Activated naive CD4-positive, alpha-beta T cell treated with anti-CD3 and anti-CD28 coated beads for 36 hours (primary cell): ENCODE measurements at regions of chr4 and their contacts with region 1.

Region 1: GRCh38 chr4:123396307-123397143 is at the start of gene SPRY1:
- DNase-seq: peak; percentile 88
- H3K4me3 Mint-ChIP-seq: peak within 1 kb of the TSS; percentile 87
- H3K27ac Mint-ChIP-seq: peak within 1 kb of the TSS; percentile 83
- H3K4me1 Mint-ChIP-seq: peaks cover 18% of the 10 kb centered on the region
- H3K27me3 Mint-ChIP-seq: peaks cover 15% of the 10 kb centered on the region
- total RNA-seq, gene SPRY1: 16.9 to 20.3 TPM

Region 2: GRCh38 chr4:121800961-121801714 is 1595.4 kb before region 1 on chr4 and contains the start of gene EXOSC9:
- CTCF ChIA-PET with region 1: no interaction called
- intact Hi-C with region 1: loop called (anchors 5 kb)
- DNase-seq: peak; percentile 95
- H3K4me3 Mint-ChIP-seq: peak within 1 kb of the TSS; percentile 89
- H3K27ac Mint-ChIP-seq: peak within 1 kb of the TSS; percentile 98
- H3K4me1 Mint-ChIP-seq: peaks cover 46% of the 10 kb centered on the region
- H3K27me3 Mint-ChIP-seq: no peaks in the 10 kb centered on the region
- total RNA-seq, gene EXOSC9: 57.7 to 58.7 TPM

Region 3: DNA sequence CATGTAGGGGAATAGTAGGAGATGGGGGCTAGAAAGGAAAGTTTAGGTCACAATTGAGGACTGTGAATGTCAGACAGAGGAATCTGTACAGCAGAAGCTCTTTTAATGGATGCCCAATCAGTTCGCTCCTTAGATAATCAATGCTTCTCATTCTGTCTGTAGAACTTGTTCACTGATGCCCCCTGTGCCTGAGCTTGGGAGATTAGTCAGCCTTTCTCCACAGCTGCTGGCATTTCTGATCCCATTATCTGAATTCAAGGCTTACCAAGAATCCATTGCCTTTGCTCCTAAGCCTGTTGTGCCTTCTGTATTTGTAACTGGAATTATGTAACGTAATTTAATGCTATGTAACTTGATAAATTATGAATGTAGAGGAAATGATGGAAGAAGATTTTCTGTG is 717.2 kb before region 1 on chr4:
- CTCF ChIA-PET with region 1: no interaction called
- intact Hi-C with region 1: no loop called
- DNase-seq: no peak
- H3K4me3 Mint-ChIP-seq: no peak overlapping the region
- H3K27ac Mint-ChIP-seq: no peak overlapping the region
- H3K4me1 Mint-ChIP-seq: peaks cover 11% of the 10 kb centered on the region
- H3K27me3 Mint-ChIP-seq: peaks cover 18% of the 10 kb centered on the region

Region 4: DNA sequence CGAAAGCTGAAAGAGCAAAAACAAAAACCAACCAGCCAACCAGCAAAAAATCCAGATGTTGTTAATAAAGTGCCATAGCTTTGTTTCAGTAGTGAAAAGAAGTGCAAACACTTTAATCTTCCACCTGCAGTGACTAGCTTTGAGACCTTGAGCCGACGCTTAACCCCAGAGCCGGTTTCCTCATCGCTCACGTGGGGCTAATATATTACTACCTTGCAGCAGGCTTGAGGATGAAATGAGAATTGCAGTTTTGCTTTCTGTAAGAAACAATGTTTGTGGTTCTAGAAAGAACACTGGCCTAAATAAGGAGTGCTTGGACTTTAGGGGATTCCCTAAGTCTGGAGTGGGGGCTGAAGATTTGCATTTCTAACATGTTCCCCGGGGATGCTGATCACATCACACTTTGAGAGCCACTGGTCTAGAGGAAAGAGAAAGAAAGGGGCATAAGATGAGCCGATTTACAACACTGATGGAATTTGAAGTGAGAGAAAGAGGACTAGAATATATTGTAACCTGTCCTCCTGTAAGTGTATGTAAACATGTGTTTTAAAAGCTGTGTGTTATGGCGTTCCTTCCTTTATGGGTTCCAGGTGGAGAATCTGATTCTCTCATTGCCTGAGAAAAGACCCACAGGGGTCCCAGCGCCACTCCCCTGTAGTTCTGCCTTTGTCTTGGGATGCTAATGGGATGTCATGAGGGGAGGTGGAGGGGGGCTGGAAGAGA is 568.5 kb before region 1 on chr4:
- CTCF ChIA-PET with region 1: no interaction called
- intact Hi-C with region 1: loop called (anchors 2 kb)
- DNase-seq: peak; percentile 71
- H3K4me3 Mint-ChIP-seq: peak overlapping the region; percentile 78
- H3K27ac Mint-ChIP-seq: peak overlapping the region; percentile 9
- H3K4me1 Mint-ChIP-seq: peaks cover 12% of the 10 kb centered on the region
- H3K27me3 Mint-ChIP-seq: peaks cover 74% of the 10 kb centered on the region

Region 5: DNA sequence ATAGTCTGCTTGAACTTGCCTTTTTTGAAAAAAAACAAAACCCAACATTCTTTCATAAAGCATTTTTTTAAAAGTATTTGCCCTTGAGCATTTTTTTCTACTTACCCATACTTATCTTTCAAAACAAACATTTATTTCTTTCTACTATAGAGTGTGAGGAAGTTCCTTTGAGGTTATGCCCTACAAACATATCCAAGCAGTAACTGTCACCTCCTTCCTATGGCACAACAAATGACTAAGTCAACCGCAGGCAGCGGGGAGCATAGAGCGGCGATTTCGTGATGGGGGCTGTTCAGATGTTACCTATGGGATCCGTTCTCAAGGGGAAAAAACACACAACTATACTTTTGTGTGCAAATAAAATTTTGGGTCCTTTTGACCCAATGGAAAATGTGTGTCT is 19.5 kb after region 1 on chr4:
- CTCF ChIA-PET with region 1: interaction called, 3 read pairs
- intact Hi-C with region 1: loop called (anchors 1 kb)
- DNase-seq: peak; percentile 66
- H3K4me3 Mint-ChIP-seq: no peak overlapping the region
- H3K27ac Mint-ChIP-seq: no peak overlapping the region
- H3K4me1 Mint-ChIP-seq: peaks cover 54% of the 10 kb centered on the region
- H3K27me3 Mint-ChIP-seq: no peaks in the 10 kb centered on the region

Region 6: GRCh38 chr4:123505095-123506010 is 108.8 kb after region 1 on chr4:
- CTCF ChIA-PET with region 1: no interaction called
- intact Hi-C with region 1: loop called (anchors 1 kb)
- DNase-seq: peak; percentile 21
- H3K4me3 Mint-ChIP-seq: peak overlapping the region; percentile 82
- H3K27ac Mint-ChIP-seq: no peak overlapping the region
- H3K4me1 Mint-ChIP-seq: peaks cover 7% of the 10 kb centered on the region
- H3K27me3 Mint-ChIP-seq: peaks cover 38% of the 10 kb centered on the region

Region 7: GRCh38 chr4:123671633-123672404 is 275.3 kb after region 1 on chr4:
- CTCF ChIA-PET with region 1: interaction called, 4 read pairs
- intact Hi-C with region 1: loop called (anchors 1 kb)
- DNase-seq: peak; percentile 55
- H3K4me3 Mint-ChIP-seq: no peak overlapping the region
- H3K27ac Mint-ChIP-seq: no peak overlapping the region
- H3K4me1 Mint-ChIP-seq: peaks cover 17% of the 10 kb centered on the region
- H3K27me3 Mint-ChIP-seq: peaks cover 44% of the 10 kb centered on the region